Tibial artery (tissue), 4 donors: ENCODE measurements at regions of chr2 and their contacts with region 1.

Region 1: DNA sequence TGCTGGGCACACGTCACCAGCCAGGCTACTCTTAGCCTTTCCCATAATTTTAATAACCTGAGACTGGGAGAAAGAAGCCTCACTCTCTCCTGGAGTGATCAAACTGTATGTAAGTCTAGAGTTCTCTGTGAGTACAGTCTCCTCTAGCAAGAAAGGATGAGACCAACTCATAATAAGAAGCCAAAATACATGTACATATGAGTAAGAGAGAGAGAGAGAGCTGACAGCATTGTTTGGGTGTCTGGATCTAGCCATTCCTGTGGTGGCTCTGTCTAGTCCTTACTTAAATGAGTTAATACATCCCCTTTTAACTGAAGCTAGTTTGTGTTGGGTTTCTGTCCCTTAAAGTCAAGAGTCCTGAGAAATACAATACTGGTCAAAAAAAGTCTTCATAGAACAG is 26.0 kb upstream of the ANXA4 start:
- DNase-seq: no peak
- H3K4me3 ChIP-seq: no peak overlapping the region
- H3K27ac ChIP-seq: no peak overlapping the region
- H3K4me1 ChIP-seq: peaks cover 0 to 7% (median 3%) of the 10 kb centered on the region in 4 donors
- H3K27me3 ChIP-seq: no peaks in the 10 kb centered on the region
- CTCF ChIP-seq: no peak

Region 2: DNA sequence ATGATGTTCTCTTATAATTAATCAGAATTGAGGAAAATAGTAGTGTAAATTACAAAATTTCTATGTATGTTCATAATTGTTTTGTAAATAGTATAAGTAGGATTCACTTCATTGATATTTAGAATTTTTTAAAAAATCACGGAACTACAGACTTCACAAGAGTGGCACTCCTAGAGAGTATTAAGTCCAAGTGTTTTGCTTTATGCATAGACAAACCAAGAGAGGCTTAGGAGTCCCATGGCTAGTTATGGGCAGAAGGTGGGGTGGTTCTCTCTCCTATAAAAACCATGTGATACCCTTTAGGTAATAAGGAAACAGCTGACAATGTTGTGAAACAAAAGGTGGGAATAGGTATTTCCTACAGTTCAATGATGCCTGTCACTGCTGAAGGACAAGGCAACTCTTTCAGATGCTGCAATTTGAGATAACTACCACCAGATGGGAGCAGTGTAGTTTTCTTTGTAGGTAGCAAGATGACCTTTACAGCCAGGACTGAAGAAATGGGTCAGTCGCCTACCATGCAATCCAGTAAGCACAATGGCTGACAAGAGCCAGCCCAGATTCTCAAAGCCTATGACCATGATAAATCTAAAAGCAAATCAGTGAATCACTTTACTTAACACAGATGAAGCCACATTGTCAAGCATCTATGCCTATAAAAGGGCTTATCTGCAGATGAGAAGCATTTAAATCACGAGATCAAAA is 156.4 kb before region 1 on chr2:
- intact Hi-C with region 1: loop called (anchors 2 kb)
- DNase-seq: no peak
- H3K4me3 ChIP-seq: no peak overlapping the region
- H3K27ac ChIP-seq: no peak overlapping the region
- H3K4me1 ChIP-seq: peaks cover 0 to 16% (median 4%) of the 10 kb centered on the region in 4 donors
- H3K27me3 ChIP-seq: no peaks in the 10 kb centered on the region
- CTCF ChIP-seq: peak; percentile 62 to 71

Region 3: DNA sequence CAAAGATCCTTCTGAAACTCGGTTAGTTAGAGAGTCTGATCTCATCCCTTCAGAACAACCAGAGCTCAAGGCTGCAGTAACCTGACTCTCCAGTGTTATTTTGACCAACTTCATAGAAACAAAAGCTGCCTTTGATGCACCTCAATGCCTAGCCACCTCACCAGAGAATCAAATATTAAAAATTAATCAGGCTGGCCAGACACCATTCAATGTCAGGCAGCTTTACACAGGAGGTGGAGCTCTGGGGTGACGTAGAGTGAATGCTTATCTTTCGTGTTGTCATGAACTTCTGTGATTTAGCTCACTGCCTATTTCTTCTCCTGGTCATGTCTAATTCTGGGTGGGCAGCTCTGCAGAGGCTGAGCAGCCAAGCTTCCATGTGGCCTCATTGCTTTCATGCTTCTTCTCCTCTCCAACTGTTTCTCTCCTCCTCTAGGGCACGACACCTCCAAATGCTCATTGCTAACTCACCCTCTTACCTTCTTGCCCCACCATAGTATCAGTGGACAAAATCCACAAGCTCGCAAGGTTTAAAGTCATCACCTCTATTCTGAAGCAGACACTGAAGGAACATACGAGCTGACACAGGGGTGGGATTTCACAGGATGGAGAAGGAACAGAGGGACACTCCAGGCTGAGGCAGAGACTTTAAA is 111.8 kb before region 1 on chr2:
- intact Hi-C with region 1: no loop called
- DNase-seq: no peak
- H3K4me3 ChIP-seq: no peak overlapping the region
- H3K27ac ChIP-seq: no peak overlapping the region
- H3K4me1 ChIP-seq: peaks cover 0 to 29% (median 12%) of the 10 kb centered on the region in 4 donors
- H3K27me3 ChIP-seq: no peaks in the 10 kb centered on the region
- CTCF ChIP-seq: no peak

Region 4: GRCh38 chr2:69770193-69771146 is 54.5 kb after region 1 on chr2:
- intact Hi-C with region 1: no loop called
- DNase-seq: peak; percentile 70 to 74
- H3K4me3 ChIP-seq: peak overlapping the region in 1 of 2 donors; percentile 13
- H3K27ac ChIP-seq: peak overlapping the region; percentile 81 to 83
- H3K4me1 ChIP-seq: peaks cover 0 to 99% (median 65%) of the 10 kb centered on the region in 4 donors
- H3K27me3 ChIP-seq: no peaks in the 10 kb centered on the region
- CTCF ChIP-seq: no peak

Region 5: GRCh38 chr2:70283500-70284191 is 567.7 kb after region 1 on chr2:
- intact Hi-C with region 1: no loop called
- DNase-seq: no peak
- H3K4me3 ChIP-seq: no peak overlapping the region
- H3K27ac ChIP-seq: no peak overlapping the region
- H3K4me1 ChIP-seq: peaks cover 0 to 4% (median 0%) of the 10 kb centered on the region in 4 donors
- H3K27me3 ChIP-seq: no peaks in the 10 kb centered on the region
- CTCF ChIP-seq: no peak